MCF 10A (cell line): ENCODE measurements at regions of chr15 and their contacts with region 1.

Region 1: DNA sequence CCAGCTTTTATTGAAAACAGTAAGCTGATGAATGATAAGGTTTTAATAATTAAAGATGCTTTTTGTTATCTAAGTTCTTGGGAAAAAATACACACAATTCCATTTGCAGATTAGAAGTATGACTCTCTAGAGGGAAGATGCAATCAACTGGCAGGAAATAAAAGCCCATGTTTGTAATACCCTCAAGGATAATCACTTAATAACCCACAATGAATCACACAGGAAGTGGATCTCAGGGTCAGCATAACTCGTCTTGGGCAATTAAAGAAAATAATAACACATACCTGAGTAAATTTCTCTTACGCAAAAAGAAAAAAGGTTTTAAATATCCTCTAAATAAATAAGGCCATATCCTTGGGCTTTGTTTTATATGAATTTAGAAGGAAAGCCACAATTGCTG is 9.4 kb upstream of the EID1 start:
- DNase-seq: peak; percentile 78
- H3K4me3 Mint-ChIP-seq: no peak overlapping the region
- H3K27ac Mint-ChIP-seq: peak overlapping the region; percentile 82
- H3K4me1 Mint-ChIP-seq: peaks cover 39% of the 10 kb centered on the region
- H3K27me3 Mint-ChIP-seq: no peaks in the 10 kb centered on the region
- CTCF ChIP-seq: no peak

Region 2: DNA sequence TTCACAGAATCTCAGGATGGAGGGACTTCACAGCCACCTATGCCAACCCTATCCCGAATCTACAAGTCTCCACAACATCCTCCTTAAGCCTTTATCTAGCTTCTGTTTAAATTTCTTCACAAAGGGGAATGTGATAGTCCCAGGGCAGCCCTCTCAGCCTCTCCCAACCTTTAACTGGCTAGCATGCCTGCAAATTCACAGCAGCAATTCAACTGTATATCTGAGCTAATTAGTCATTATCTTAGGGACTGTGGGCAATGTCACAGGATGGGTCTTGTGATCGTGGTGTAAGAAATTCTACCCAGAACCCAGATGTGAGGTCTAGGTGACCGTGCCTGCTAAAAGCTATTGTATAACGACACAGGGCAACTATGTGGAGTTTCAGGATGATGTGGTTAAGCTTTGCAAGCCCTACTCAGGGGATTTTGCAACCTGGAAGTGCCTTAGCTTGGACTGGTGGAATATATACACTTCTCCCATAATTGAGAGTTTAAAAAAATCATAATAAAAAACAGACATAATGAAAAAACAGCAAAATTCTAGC is 157.5 kb before region 1 on chr15:
- CTCF ChIA-PET with region 1: no interaction called
- POLR2A ChIA-PET with region 1: no interaction called
- intact Hi-C with region 1: no loop called
- DNase-seq: no peak
- H3K4me3 Mint-ChIP-seq: no peak overlapping the region
- H3K27ac Mint-ChIP-seq: no peak overlapping the region
- H3K4me1 Mint-ChIP-seq: no peaks in the 10 kb centered on the region
- H3K27me3 Mint-ChIP-seq: no peaks in the 10 kb centered on the region
- CTCF ChIP-seq: no peak

Region 3: GRCh38 chr15:48759921-48760320 is 108.6 kb before region 1 on chr15:
- CTCF ChIA-PET with region 1: no interaction called
- POLR2A ChIA-PET with region 1: no interaction called
- intact Hi-C with region 1: no loop called
- DNase-seq: peak; percentile 17
- H3K4me3 Mint-ChIP-seq: no peak overlapping the region
- H3K27ac Mint-ChIP-seq: peak overlapping the region; percentile 11
- H3K4me1 Mint-ChIP-seq: peaks cover 10% of the 10 kb centered on the region
- H3K27me3 Mint-ChIP-seq: no peaks in the 10 kb centered on the region
- CTCF ChIP-seq: no peak

Region 4: GRCh38 chr15:48975472-48976419 is 107.2 kb after region 1 on chr15:
- CTCF ChIA-PET with region 1: interaction called, 19 read pairs
- POLR2A ChIA-PET with region 1: interaction called, 8 read pairs
- intact Hi-C with region 1: no loop called
- DNase-seq: peak; percentile 74
- H3K4me3 Mint-ChIP-seq: peak overlapping the region; percentile 45
- H3K27ac Mint-ChIP-seq: no peak overlapping the region
- H3K4me1 Mint-ChIP-seq: peaks cover 10% of the 10 kb centered on the region
- H3K27me3 Mint-ChIP-seq: no peaks in the 10 kb centered on the region
- CTCF ChIP-seq: peak; percentile 91

Region 5: DNA sequence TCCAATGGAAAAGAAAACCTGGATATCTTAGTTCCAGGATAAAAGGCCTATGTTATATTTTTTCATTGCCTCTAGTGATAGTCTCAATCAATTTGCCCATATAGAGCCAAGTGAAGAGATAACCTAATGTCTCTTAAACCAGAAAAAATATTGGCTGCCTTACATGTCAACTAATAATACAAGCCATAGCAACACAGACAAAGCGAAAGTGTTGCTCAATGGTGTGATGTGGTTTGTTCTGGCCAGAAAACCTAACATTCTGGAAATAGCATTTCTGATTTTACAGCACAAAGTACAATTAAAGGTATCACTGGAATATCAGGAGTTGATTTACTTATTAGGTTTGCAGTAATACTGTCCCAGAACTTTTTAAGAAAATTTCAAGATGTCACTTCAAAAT is 1149.0 kb after region 1 on chr15:
- CTCF ChIA-PET with region 1: no interaction called
- POLR2A ChIA-PET with region 1: no interaction called
- intact Hi-C with region 1: no loop called
- DNase-seq: no peak
- H3K4me3 Mint-ChIP-seq: no peak overlapping the region
- H3K27ac Mint-ChIP-seq: no peak overlapping the region
- H3K4me1 Mint-ChIP-seq: no peaks in the 10 kb centered on the region
- H3K27me3 Mint-ChIP-seq: no peaks in the 10 kb centered on the region
- CTCF ChIP-seq: no peak